ENCODE measurements at regions of chr18 and their contacts with region 1.

Region 1: GRCh38 chr18:26051843-26052242 is 38.6 kb downstream of the SS18 start:
- DNase-seq: no peak
- ATAC-seq: no peak
- H3K4me3 Mint-ChIP-seq: no peak overlapping the region
- H3K27ac Mint-ChIP-seq: no peak overlapping the region
- H3K4me1 Mint-ChIP-seq: peaks cover 9% of the 10 kb centered on the region
- H3K27me3 Mint-ChIP-seq: no peaks in the 10 kb centered on the region
- CTCF ChIP-seq: no peak

Region 2: DNA sequence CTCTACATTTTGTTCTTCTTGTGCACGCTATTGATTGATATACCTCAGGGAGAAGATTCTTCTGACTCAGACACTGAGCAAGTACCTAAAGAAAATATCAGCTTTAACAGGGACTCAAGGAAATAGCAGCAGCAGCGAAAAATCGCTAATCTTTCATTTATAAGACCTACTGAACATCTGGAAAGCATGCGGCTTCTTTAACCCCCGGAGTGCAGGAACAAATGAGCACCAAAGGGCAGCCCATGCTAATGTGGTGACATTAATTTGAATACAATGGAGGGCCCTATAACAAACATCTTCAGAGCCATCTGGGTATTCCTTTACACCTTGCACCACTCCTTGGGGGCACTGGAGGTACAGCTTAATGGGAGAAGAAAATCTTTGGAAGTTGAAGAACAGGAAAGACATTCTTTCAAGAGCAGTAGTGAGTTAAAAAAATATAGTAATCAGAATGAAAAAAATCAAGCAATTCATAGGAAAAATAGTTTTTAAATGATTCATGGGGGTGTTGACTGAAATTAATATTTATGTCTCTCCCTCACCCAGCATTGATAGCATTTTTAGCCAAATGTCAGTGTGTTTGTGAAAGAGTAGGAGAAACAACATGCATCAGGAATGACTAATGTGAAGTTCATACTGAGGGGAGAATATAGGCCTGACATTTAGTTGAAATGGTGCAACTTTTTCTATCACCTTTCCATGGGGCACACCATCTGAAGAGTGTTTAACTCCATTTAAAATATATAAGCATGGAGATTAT is 1309.7 kb before region 1 on chr18:
- CTCF ChIA-PET with region 1: no interaction called
- POLR2A ChIA-PET with region 1: no interaction called
- intact Hi-C with region 1: no loop called
- DNase-seq: no peak
- ATAC-seq: no peak
- H3K4me3 Mint-ChIP-seq: no peak overlapping the region
- H3K27ac Mint-ChIP-seq: no peak overlapping the region
- H3K4me1 Mint-ChIP-seq: no peaks in the 10 kb centered on the region
- H3K27me3 Mint-ChIP-seq: no peaks in the 10 kb centered on the region
- CTCF ChIP-seq: no peak

Region 3: DNA sequence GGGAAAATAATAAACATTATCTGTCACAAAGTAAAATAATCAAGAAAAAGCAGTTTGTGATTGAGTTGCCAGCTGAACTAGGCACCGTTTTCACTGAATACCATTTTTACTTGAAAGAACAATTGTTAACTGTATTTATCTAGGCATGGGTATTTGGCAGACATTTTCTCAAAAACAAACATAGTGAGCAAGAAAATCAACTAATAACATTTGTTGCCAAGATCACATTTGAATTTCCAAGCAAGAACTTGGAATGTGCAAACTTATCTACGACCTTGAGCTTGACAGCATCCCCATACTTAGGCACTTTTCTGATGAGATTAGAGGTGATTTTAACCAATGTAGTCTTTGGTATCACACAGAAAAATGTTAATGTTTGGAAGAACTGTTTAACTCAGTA is 21.9 kb after region 1 on chr18:
- CTCF ChIA-PET with region 1: no interaction called
- POLR2A ChIA-PET with region 1: no interaction called
- intact Hi-C with region 1: loop called (anchors 2 kb)
- DNase-seq: no peak
- ATAC-seq: no peak
- H3K4me3 Mint-ChIP-seq: no peak overlapping the region
- H3K27ac Mint-ChIP-seq: no peak overlapping the region
- H3K4me1 Mint-ChIP-seq: peaks cover 22% of the 10 kb centered on the region
- H3K27me3 Mint-ChIP-seq: no peaks in the 10 kb centered on the region
- CTCF ChIP-seq: no peak

Measured in activated B cell treated with CpG ODN at 0.5 μM for 24 hours (primary cell).